ENCODE measurements at regions of chr9 and their contacts with region 1.

Region 1: DNA sequence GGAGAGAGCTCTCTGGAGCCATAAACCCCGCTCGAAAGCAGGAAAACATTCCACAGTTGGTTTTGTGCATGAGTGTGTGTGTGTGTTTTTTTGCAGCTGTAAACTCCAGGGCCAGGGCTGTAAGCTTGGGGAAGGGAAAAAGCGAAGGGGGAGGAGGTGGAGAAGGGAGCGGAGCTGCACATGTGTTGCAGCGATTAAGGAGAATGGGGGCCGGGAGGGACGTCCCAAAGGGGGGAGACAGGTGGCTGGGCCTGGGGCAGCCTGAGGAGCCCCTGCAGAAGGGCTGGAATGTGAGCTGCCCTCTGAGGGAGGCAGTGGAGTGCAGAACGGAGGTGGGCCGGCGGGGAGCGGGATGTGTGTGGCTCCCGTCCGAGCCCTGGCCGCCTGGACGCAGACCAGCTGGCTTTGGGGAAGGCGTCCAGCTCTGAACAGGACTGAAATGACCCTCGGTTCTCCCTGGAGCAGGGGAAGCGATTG is 2.7 kb upstream of the MYMK start:
- DNase-seq: peak; percentile 30
- ATAC-seq: no peak; the same call in 1 of the 2 replicates
- H3K4me3 Mint-ChIP-seq: peak overlapping the region; percentile 34; the same call in 1 of the 2 replicates
- H3K27ac Mint-ChIP-seq: 0 out of 2 replicates have a peak overlapping the region, but pooled peaks have one; percentile 3
- H3K4me1 Mint-ChIP-seq: peaks cover 33% of the 10 kb centered on the region
- H3K27me3 Mint-ChIP-seq: peaks cover 2% of the 10 kb centered on the region; the same call in 1 of the 2 replicates
- CTCF ChIP-seq: no peak

Region 2: DNA sequence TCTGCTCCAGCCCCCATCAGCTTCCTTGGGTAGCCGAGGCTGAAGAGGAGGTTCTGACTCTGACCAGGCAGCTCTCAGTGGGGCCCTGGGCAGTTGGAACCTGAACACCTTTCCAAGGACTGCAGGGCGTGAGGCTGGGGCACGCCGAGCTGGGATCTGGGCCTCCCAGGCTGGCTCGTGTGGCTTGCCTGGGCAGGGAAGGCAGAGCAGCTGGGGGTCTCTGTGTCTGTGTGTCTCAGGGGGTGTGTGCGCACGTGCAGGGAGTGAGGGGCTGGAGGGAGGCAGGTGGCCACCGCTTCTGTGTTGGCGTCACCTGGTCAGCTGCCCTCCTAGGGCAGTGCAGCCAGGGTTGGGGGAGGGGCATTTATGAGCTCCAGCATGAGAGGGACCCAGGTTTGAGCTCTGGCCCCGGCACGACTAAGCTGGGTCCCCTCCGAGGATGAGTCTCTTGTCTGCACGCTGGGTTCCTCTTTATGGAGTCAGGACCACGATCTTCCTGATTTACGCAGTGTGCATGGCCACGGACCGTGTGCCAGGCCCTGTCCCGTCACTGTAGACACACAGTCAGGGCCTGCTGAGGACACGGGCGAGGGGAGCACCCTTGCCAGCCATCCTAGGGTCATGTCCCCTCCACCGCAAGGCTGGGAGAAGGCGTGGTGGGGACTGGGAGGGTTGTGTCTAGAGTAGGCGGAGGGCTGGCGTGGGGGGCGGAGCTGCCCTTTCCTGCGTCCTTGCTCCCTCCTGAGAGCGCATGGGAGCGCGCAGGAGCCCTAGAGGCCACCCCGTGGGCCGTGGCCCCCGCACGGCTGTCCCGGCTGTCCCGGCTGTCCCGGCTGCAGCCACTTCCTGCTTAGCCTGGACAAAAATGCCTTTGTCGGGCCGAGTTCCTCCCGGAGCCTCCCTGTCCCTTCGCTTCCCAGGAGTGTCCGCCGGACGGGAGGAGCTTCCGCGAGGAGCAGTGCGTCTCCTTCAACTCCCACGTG is 11.7 kb after region 1 on chr9:
- CTCF ChIA-PET with region 1: interaction called, 12 read pairs
- POLR2A ChIA-PET with region 1: no interaction called
- DNase-seq: no peak
- ATAC-seq: peak; percentile 7; the same call in 1 of the 2 replicates
- H3K4me3 Mint-ChIP-seq: no peak overlapping the region
- H3K27ac Mint-ChIP-seq: peak overlapping the region; percentile 94
- H3K4me1 Mint-ChIP-seq: peaks cover 23% of the 10 kb centered on the region
- H3K27me3 Mint-ChIP-seq: peaks cover 11% of the 10 kb centered on the region
- CTCF ChIP-seq: no peak